SK-N-SH (cell line): ENCODE measurements at regions of chr20 and their contacts with region 1.

Region 1: DNA sequence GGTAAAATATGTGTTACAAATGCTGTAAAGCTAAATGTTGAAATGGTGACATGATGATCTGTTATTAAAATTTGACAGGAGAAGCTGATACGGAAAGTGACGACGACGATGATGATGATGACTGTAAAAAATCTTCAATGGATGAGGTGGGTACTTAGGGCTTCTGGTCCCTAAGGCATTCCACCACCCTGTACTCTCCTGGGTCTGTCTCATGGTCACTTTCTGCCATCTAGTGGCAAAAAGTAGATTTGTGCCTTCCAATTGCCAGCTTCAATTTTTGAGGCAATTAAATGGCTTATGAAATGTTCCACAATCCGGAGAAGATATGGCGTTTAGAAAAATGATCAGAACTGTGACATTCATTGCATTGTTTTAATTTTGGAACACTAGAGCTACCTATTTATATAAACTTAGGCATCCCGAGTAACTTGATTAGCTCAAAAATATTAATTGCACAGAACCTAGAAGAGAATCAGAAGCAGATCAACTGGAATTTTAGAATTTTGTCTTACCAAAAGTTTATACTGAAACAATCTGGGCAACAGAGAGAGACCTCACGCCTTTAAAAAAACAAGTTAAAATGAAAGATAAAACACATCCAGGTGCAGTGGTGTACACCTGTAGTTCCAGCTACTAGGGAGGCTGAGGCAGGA is 346.5 kb upstream of the PLCB4 start:
- DNase-seq: peak; percentile 52
- H3K4me3 ChIP-seq: no peak overlapping the region
- H3K27ac ChIP-seq: no peak overlapping the region
- H3K4me1 ChIP-seq: peaks cover 0 to 9% of the 10 kb centered on the region in 2 experiments; a peak in 1 of 4 replicates
- H3K27me3 ChIP-seq: no peaks in the 10 kb centered on the region
- CTCF ChIP-seq: peak; percentile 86
- EP300 ChIP-seq: no peak
- RAD21 ChIP-seq: peak; percentile 96

Region 2: DNA sequence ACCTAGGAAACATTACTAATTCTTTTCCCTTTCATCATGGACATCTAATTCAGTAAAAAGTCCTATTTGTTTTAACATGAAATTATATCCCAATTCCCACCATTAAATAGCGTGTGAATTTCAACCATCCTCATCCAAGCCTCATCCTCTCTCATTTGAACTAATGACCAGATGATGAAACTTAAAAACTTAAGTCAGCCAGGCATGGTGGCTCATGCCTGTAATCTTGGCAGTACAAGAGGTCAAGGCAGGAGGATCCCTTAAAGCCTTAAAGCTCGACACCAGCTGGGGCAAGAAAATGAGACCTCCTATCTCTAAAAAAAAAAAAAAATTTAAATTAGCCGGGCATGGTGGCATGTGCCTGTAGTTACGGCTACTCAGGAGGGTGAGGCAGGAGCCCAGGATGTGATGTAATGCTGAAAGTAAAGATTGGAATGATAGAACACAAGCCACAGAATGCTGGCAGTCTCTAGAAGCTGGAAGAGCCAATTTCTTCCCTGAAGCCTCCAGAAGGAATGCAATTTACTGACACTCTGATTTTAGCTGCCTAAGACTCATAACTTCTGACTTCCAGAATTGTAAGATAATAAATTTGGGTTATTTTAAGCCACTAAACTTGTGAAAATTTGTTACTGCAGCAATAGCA is 755.1 kb before region 1 on chr20:
- CTCF ChIA-PET with region 1: interaction called, 11 read pairs
- POLR2A ChIA-PET with region 1: no interaction called
- DNase-seq: no peak
- H3K4me3 ChIP-seq: no peak overlapping the region
- H3K27ac ChIP-seq: peak overlapping the region in 1 of 2 experiments; percentile 76; a peak in 2 of 4 replicates
- H3K4me1 ChIP-seq: peaks cover 0 to 3% of the 10 kb centered on the region in 2 experiments; a peak in 2 of 4 replicates
- H3K27me3 ChIP-seq: no peaks in the 10 kb centered on the region
- CTCF ChIP-seq: no peak
- EP300 ChIP-seq: no peak
- RAD21 ChIP-seq: no peak

Region 3: DNA sequence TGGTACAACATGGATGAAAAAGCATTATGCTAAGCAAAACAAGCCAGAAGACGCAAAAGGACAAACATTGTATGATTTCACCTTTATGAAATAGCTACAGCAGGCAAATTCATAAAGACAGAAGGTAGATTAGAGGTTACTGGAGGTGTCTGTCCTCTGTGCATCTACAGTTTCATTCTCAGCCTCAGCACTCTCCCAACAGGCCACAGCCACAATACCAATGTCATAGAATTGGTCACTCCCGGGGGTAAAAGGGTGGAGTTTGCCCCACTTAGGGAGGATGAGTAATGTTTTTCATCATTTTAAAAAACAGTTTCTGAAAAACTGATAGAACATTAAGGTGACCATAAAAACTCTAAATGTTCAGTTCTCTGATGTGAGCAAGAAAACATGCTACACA is 685.6 kb before region 1 on chr20:
- CTCF ChIA-PET with region 1: interaction called, 34 read pairs
- POLR2A ChIA-PET with region 1: no interaction called
- DNase-seq: no peak
- H3K4me3 ChIP-seq: no peak overlapping the region
- H3K27ac ChIP-seq: no peak overlapping the region
- H3K4me1 ChIP-seq: no peaks in the 10 kb centered on the region
- H3K27me3 ChIP-seq: no peaks in the 10 kb centered on the region
- CTCF ChIP-seq: no peak
- EP300 ChIP-seq: no peak
- RAD21 ChIP-seq: no peak

Region 4: DNA sequence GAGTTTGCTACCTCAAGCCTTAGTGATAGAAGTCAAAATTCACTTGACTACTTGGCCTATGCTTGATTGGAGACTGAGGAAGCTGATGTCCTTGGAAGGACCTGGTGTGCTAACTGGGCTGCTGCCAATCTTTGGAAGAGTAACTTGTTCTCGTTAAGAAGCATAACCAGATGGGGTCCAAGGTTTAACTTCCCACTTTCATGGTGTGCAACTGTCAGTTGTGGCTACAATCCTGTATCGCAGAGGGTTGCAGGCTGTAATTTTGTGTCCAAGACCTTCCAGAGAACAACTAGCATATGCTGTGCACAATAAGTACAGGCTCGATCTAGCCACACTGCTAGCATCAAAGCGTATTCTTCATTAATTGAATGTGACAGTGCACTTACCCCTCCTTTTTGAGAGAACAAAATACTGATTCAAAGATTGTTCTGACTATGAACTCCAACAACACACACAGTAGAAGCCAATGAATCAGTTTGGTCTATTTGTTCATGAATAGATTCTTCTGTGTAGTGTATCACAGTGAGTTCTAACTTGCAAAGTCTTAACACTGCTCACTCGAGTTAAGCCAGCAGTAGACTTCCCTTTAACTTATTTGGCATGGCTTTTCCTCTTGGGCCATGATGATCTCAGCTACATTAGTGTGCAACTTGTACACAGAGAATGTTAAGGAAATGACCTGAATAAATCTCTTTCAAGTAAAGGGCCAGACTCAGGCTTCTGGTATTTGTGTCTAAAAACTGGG is 606.2 kb before region 1 on chr20:
- CTCF ChIA-PET with region 1: interaction called, 13 read pairs
- POLR2A ChIA-PET with region 1: no interaction called
- DNase-seq: no peak
- H3K4me3 ChIP-seq: no peak overlapping the region
- H3K27ac ChIP-seq: peak overlapping the region; percentile 47 to 79
- H3K4me1 ChIP-seq: peaks cover 22 to 29% of the 10 kb centered on the region in 2 experiments; a peak in 3 of 4 replicates
- H3K27me3 ChIP-seq: no peaks in the 10 kb centered on the region
- CTCF ChIP-seq: no peak
- EP300 ChIP-seq: peak in 1 of 2 experiments; percentile 54; a peak in 1 of 4 replicates
- RAD21 ChIP-seq: no peak

Region 5: DNA sequence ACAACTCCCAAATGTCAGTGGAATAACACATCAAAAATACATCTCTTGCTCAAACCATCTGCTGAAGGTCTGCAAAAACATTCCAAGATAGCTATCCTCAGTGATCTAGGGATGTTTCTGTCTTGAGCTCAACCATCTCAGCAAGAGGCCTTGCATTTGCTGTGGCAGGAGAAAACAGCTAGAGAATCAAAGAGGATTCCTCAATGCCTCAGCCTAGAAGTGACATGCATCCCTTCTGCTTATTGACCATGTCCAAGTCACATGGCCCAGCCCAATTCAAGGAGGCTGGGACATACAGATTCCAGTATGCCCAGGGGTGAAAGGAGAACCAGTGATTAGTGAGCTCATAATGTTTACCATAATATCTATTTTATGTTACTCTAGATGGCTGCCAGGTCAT is 320.8 kb before region 1 on chr20:
- CTCF ChIA-PET with region 1: interaction called, 12 read pairs
- POLR2A ChIA-PET with region 1: no interaction called
- DNase-seq: no peak
- H3K4me3 ChIP-seq: no peak overlapping the region
- H3K27ac ChIP-seq: peak overlapping the region in 1 of 2 experiments; percentile 16; a peak in 1 of 4 replicates
- H3K4me1 ChIP-seq: peaks cover 0 to 15% of the 10 kb centered on the region in 2 experiments; a peak in 3 of 4 replicates
- H3K27me3 ChIP-seq: no peaks in the 10 kb centered on the region
- CTCF ChIP-seq: no peak
- EP300 ChIP-seq: no peak
- RAD21 ChIP-seq: no peak

Region 6: DNA sequence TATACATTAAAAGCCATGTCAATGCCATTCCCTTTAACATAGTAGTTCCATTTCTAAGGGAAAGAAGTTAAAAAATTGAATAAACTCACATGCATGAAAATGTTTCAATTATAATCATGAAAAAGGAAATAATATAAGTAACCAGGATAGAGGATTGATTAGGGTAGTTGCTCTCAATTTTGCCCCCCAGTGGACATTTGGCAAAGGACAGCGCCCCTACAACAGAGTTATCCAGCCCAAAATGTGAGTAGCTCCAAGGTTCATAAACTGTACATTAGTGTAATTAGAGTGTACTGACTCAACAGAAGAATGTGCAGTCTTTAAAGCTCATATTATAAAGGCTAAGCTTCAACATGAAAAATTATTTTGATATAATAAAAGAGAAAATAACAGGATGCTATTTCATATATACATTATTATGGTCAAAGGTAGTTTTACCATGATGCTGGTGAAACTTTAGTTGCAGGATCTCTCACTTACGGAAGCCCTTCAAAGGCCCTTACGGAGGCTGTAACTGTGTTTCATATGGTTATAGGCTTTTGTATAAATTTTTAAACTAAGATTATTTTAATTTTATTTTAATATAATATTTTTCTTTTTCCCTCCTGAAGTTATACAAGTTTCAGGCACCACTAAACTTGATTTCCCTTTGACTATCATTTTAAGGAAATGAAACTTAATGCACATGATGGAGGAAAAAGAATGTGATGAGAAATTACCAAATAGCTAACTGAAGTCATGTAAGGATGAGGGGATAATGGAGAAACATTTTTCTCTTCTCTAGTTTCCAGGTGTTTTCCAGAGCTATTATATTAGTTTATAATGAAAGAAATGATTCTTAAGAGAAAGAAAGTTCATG is 186.8 kb before region 1 on chr20:
- CTCF ChIA-PET with region 1: interaction called, 37 read pairs
- POLR2A ChIA-PET with region 1: no interaction called
- DNase-seq: peak; percentile 30
- H3K4me3 ChIP-seq: no peak overlapping the region; a peak in 1 of 4 replicates
- H3K27ac ChIP-seq: no peak overlapping the region
- H3K4me1 ChIP-seq: peaks cover 5% of the 10 kb centered on the region in 2 experiments; a peak in 3 of 4 replicates
- H3K27me3 ChIP-seq: no peaks in the 10 kb centered on the region
- CTCF ChIP-seq: peak; percentile 65
- EP300 ChIP-seq: no peak
- RAD21 ChIP-seq: peak; percentile 54

Region 7: DNA sequence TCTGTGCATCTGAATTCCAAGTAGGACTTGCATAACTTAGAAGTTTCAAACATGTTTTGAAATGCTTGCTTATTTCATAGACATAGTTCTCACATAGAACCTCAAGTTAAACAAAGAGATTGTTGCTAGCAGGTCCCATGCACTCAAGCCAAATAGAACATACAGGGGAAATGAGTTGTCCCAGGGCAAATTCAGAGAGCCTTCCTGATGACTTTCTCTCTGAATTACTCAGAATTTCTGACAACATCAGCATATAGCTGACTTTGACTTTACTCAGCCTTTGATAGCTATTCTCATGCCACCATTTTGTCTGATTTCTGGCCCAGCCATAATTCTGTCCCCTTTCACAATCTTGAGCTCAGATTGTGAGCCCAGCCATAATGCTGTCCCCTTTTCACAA is 13.3 kb after region 1 on chr20:
- CTCF ChIA-PET with region 1: interaction called, 33 read pairs
- POLR2A ChIA-PET with region 1: no interaction called
- DNase-seq: no peak
- H3K4me3 ChIP-seq: no peak overlapping the region
- H3K27ac ChIP-seq: no peak overlapping the region
- H3K4me1 ChIP-seq: no peaks in the 10 kb centered on the region
- H3K27me3 ChIP-seq: no peaks in the 10 kb centered on the region
- CTCF ChIP-seq: no peak
- EP300 ChIP-seq: no peak
- RAD21 ChIP-seq: no peak

Region 8: DNA sequence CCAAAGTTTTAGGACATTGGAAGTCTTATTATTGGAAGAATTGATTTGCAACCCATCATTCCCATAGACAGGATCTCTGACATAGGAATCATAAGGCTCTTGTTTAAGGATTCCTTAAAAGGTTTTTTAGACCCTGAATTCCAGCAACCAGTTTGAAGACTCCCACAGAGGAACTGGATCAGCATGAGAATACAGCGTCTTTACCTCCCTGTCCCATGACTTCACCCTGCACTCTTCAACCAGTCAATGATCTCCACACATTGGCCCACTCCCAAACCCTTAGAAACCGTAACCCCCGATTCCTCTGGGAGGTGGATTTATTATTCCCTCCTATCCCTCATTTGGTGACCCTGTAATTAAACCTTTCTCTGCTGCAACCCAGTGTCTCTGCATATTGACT is 195.7 kb after region 1 on chr20:
- CTCF ChIA-PET with region 1: no interaction called
- POLR2A ChIA-PET with region 1: no interaction called
- DNase-seq: no peak
- H3K4me3 ChIP-seq: no peak overlapping the region
- H3K27ac ChIP-seq: no peak overlapping the region
- H3K4me1 ChIP-seq: no peaks in the 10 kb centered on the region
- H3K27me3 ChIP-seq: no peaks in the 10 kb centered on the region
- CTCF ChIP-seq: no peak
- EP300 ChIP-seq: no peak
- RAD21 ChIP-seq: no peak